Adrenal gland (tissue), 19 donors: ENCODE measurements at regions of chr1 and their contacts with region 1.

Region 1: GRCh38 chr1:203871107-203871875 is 9.9 kb downstream of the SNRPE start:
- DNase-seq: peak; percentile 32 to 77 (median 51)
- H3K4me3 ChIP-seq: no peak overlapping the region
- H3K27ac ChIP-seq: peak overlapping the region in 3 of 5 donors; percentile 6 to 54 (median 37)
- H3K4me1 ChIP-seq: peaks cover 0 to 14% of the 10 kb centered on the region in 2 donors
- H3K27me3 ChIP-seq: no peaks in the 10 kb centered on the region
- CTCF ChIP-seq: peak; percentile 72 to 99 (median 98)
- POLR2A ChIP-seq: no peak

Region 2: DNA sequence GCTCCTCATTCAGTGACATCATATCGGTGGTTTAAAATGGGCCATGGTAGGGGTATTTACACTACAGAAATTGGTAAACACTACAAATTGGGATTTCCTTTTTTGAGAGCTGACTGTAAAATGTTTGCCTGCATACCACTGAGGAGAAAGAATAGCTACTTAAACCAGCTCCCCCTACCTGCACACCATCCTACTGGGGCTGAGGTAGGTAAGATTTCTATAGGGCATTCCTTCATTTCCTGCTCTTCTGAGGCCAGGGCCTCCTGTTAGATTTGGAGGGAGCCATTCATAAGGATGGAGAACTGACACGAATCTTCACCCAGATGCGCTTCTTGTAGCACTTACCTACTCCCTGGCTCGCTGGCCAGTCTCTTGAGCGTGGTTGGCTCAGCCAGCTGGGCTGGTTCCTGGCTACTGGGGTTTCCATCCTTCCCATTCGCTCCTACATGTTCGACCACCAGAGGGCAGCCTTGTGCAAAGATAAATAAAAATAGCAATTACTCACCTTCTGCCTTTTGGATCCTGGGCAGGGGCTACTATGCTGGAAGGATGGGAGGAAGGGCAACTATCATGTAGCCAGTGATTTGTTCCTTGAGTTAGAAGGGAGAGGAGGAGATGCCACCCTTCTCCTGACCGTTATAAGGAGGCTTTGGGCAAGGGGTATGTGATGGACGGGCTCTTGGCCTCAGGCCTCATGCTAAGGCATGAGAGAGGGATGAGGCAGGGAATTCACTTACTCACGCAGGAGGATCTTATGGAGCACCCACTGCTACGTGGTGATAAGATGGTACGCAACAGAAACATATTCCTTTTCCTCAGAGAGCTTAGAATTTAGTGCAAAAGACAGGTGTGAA is 366.7 kb before region 1 on chr1:
- intact Hi-C with region 1: no loop called
- DNase-seq: peak; percentile 77 to 95 (median 88)
- H3K4me3 ChIP-seq: no peak overlapping the region
- H3K27ac ChIP-seq: no peak overlapping the region
- H3K4me1 ChIP-seq: peaks cover 7 to 22% of the 10 kb centered on the region in 2 donors
- H3K27me3 ChIP-seq: no peaks in the 10 kb centered on the region
- CTCF ChIP-seq: peak; percentile 75 to 93 (median 84)
- POLR2A ChIP-seq: no peak

Region 3: GRCh38 chr1:204072931-204073836 is 201.9 kb after region 1 on chr1 and contains the start of gene SOX13:
- intact Hi-C with region 1: loop called in 1 of 2 experiments (anchors 5 kb)
- DNase-seq: peak; percentile 87 to 93 (median 90)
- H3K4me3 ChIP-seq: peak within 1 kb of the TSS; percentile 52 to 80 (median 75)
- H3K27ac ChIP-seq: peak within 1 kb of the TSS; percentile 7 to 87 (median 67)
- H3K4me1 ChIP-seq: peaks cover 9 to 33% of the 10 kb centered on the region in 2 donors
- H3K27me3 ChIP-seq: no peaks in the 10 kb centered on the region
- CTCF ChIP-seq: peak in 3 of 6 experiments; percentile 13 to 33 (median 20)
- POLR2A ChIP-seq: peak; percentile 77 to 93
- total RNA-seq, gene SOX13: 4.2 to 44.5 (median 28.2) TPM